ENCODE measurements at regions of chr9 and their contacts with region 1.

Region 1: GRCh38 chr9:20941174-20941690 is 90.2 kb downstream of the HACD4 start:
- DNase-seq: peak; percentile 63
- ATAC-seq: peak; percentile 100
- H3K4me3 ChIP-seq: no peak overlapping the region
- H3K27ac ChIP-seq: no peak overlapping the region
- H3K4me1 ChIP-seq: no peaks in the 10 kb centered on the region
- H3K27me3 ChIP-seq: no peaks in the 10 kb centered on the region
- CTCF ChIP-seq: peak; percentile 94
- EP300 ChIP-seq: no peak
- POLR2A ChIP-seq: no peak
- RAD21 ChIP-seq: peak; percentile 83

Region 2: GRCh38 chr9:20426019-20426418 is 515.2 kb before region 1 on chr9:
- CTCF ChIA-PET with region 1: no interaction called
- POLR2A ChIA-PET with region 1: no interaction called
- in situ Hi-C with region 1: no loop called
- intact Hi-C with region 1: loop called (anchors 1 kb)
- DNase-seq: no peak
- ATAC-seq: no peak
- H3K4me3 ChIP-seq: no peak overlapping the region
- H3K27ac ChIP-seq: no peak overlapping the region
- H3K4me1 ChIP-seq: no peaks in the 10 kb centered on the region
- H3K27me3 ChIP-seq: no peaks in the 10 kb centered on the region
- CTCF ChIP-seq: no peak
- EP300 ChIP-seq: no peak
- POLR2A ChIP-seq: no peak
- RAD21 ChIP-seq: no peak

Region 3: GRCh38 chr9:20552874-20553575 is 388.2 kb before region 1 on chr9:
- CTCF ChIA-PET with region 1: no interaction called
- POLR2A ChIA-PET with region 1: no interaction called
- in situ Hi-C with region 1: no loop called
- intact Hi-C with region 1: loop called (anchors 2 kb)
- DNase-seq: peak; percentile 9
- ATAC-seq: no peak
- H3K4me3 ChIP-seq: no peak overlapping the region
- H3K27ac ChIP-seq: no peak overlapping the region
- H3K4me1 ChIP-seq: peaks cover 32% of the 10 kb centered on the region
- H3K27me3 ChIP-seq: no peaks in the 10 kb centered on the region
- CTCF ChIP-seq: no peak
- EP300 ChIP-seq: no peak
- POLR2A ChIP-seq: no peak
- RAD21 ChIP-seq: no peak

Region 4: DNA sequence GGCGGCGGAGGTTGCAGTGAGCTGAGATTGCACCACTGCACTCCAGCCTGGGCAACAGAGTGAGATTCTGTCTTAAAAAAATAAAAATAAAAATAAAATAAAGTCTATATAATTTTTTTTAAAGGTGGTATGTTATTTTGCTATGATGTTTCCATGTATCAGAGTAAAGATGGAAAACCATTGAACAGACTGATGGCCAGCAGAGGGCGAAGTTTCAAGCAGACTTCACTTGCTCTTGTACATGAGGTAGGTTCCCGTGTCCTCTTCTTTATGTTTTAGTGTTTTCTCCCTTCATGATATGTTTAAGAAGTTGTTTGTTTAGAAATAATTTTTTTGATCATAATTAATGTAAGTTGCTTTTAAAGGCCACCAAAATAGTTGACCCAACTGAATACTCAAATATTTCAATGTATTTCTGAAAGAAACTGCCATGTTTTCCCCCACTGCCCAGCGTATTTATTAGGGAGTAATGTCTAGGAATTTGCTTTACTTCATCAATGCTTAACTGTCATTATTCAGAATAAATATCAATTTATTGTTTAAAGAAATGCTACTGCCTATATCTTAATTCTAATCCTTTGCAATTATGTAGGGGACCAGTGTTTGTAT is 56.1 kb before region 1 on chr9:
- CTCF ChIA-PET with region 1: no interaction called
- POLR2A ChIA-PET with region 1: no interaction called
- in situ Hi-C with region 1: no loop called
- intact Hi-C with region 1: loop called (anchors 2 kb)
- DNase-seq: peak; percentile 44
- ATAC-seq: peak; percentile 69
- H3K4me3 ChIP-seq: no peak overlapping the region
- H3K27ac ChIP-seq: no peak overlapping the region
- H3K4me1 ChIP-seq: no peaks in the 10 kb centered on the region
- H3K27me3 ChIP-seq: no peaks in the 10 kb centered on the region
- CTCF ChIP-seq: peak; percentile 48
- EP300 ChIP-seq: no peak
- POLR2A ChIP-seq: no peak
- RAD21 ChIP-seq: no peak

Region 5: DNA sequence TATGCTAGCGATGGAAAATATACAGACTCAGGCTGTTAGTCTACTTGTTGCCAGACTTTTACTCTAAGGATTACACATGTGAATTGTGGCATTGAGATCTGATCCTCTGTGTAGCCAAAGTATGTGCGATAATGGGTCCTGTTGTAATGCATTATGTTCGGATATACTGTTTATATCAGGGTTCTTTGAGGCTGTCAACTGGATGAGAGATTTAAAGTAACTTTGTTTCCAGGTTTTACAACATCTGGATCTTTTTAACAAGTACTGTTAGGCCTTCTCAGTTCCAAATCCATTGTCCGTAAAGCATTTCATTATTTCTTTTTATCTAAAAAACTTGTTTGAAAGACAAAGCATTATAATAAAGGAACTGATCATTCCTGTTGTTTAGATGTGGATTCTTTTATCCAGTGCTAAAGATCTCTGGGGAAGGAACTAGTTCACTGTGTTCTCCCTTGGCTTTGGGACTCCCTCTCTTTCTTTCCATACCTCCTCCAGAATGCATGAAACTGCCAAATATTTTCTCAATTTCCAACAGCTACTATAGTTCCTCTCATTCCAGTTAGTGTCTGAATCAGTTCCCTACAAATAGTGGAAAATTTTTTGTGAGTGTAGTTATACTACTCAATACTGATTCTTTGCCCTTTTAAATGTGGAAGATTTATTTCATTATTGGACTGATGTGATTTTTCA is 21.4 kb after region 1 on chr9:
- CTCF ChIA-PET with region 1: no interaction called
- POLR2A ChIA-PET with region 1: no interaction called
- in situ Hi-C with region 1: no loop called
- intact Hi-C with region 1: no loop called
- DNase-seq: no peak
- ATAC-seq: no peak
- H3K4me3 ChIP-seq: no peak overlapping the region
- H3K27ac ChIP-seq: no peak overlapping the region
- H3K4me1 ChIP-seq: no peaks in the 10 kb centered on the region
- H3K27me3 ChIP-seq: no peaks in the 10 kb centered on the region
- CTCF ChIP-seq: no peak
- EP300 ChIP-seq: no peak
- POLR2A ChIP-seq: no peak
- RAD21 ChIP-seq: no peak

Measured in HepG2 (cell line).